ENCODE measurements at regions of chr1 and their contacts with region 1.

Region 1: DNA sequence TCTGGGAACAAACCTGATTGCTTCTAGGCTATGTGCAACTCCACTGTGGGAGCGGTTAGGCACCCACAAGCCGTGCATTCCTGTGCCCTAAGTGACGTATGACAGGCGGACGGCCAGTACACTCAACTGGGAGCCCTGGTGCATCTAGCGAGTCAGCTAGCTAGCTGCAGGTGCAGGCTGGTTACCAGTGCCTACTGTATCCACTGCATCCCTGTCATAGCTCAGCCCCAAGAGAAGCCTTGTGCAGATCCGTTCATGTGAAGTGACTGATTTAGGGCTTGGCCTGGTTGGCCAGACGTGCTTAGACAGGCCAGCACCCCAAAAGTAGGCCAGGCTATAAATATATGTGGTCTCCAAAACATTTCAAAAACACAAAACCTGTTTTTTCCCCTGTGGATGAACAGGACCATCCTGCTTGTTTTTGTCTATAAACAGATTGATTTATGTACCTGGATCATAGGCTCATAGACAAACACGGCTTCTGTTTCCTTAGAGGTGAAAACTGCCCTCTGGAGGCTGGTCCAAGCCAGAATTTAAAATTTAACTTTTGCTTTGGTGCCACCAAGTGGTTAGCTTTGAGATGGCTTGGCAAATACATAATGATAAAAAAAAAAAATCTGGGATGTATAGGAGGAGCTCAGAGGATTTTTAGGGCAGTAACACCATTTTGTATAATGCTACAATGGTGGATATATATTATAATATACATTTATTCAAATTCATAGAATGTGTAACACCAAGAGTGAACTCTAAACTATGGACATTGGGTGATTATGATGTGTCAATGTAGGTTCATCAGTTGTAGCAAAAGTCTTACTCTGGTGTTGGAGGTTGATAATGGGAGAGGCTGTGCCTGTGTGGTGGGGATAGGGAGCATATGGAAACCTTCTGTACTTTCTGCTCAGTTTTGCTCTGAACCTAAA is 68.5 kb downstream of the GIPC2 start:
- DNase-seq: peak in 4 of 5 donors; percentile 37 to 52 (median 47)
- ATAC-seq: peak; percentile 45 to 85 (median 73)
- H3K4me3 ChIP-seq: peak overlapping the region in 2 of 12 donors; percentile 1 to 11
- H3K27ac ChIP-seq: peak overlapping the region in 4 of 12 donors; percentile 22 to 63 (median 40)
- H3K4me1 ChIP-seq: peaks cover 0 to 7% (median 5%) of the 10 kb centered on the region in 12 donors
- H3K27me3 ChIP-seq: no peaks in the 10 kb centered on the region
- CTCF ChIP-seq: peak; percentile 79 to 98 (median 88)
- POLR2A ChIP-seq: no peak

Region 2: GRCh38 chr1:77825131-77825709 is 289.1 kb before region 1 on chr1:
- intact Hi-C with region 1: loop called in 3 of 10 experiments (anchors 10 kb)
- DNase-seq: peak in 1 of 5 donors; percentile 18
- ATAC-seq: peak; percentile 59 to 79 (median 72)
- H3K4me3 ChIP-seq: no peak overlapping the region
- H3K27ac ChIP-seq: peak overlapping the region in 7 of 12 donors; percentile 10 to 55 (median 33)
- H3K4me1 ChIP-seq: peaks cover 0 to 43% (median 11%) of the 10 kb centered on the region in 12 donors
- H3K27me3 ChIP-seq: no peaks in the 10 kb centered on the region
- CTCF ChIP-seq: peak in 8 of 12 donors; percentile 17 to 56 (median 40)
- POLR2A ChIP-seq: no peak

Region 3: GRCh38 chr1:77978969-77979876 is 135.1 kb before region 1 on chr1 and contains the start of gene FUBP1:
- intact Hi-C with region 1: loop called (anchors 1 to 5 kb)
- DNase-seq: peak; percentile 95 to 96 (median 95)
- ATAC-seq: peak; percentile 91 to 94 (median 94)
- H3K4me3 ChIP-seq: peak within 1 kb of the TSS; percentile 42 to 92 (median 80)
- H3K27ac ChIP-seq: peak within 1 kb of the TSS; percentile 91 to 99 (median 96)
- H3K4me1 ChIP-seq: peaks cover 0 to 63% (median 41%) of the 10 kb centered on the region in 12 donors
- H3K27me3 ChIP-seq: no peaks in the 10 kb centered on the region
- CTCF ChIP-seq: peak; percentile 51 to 90 (median 72)
- POLR2A ChIP-seq: peak in 1 of 2 donors; percentile 73
- total RNA-seq, gene FUBP1: 40.5 to 78.9 (median 64.3) TPM

Region 4: GRCh38 chr1:78045926-78046778 is 68.1 kb before region 1 on chr1 and contains the start of gene GIPC2:
- intact Hi-C with region 1: loop called in 6 of 10 experiments (anchors 1 to 10 kb)
- DNase-seq: peak; percentile 29 to 66 (median 40)
- ATAC-seq: peak in 3 of 4 donors; percentile 66 to 71 (median 68)
- H3K4me3 ChIP-seq: peak within 1 kb of the TSS; percentile 51 to 90 (median 74)
- H3K27ac ChIP-seq: peak within 1 kb of the TSS; percentile 1 to 83 (median 64)
- H3K4me1 ChIP-seq: peaks cover 0 to 38% (median 11%) of the 10 kb centered on the region in 12 donors
- H3K27me3 ChIP-seq: peaks cover 0 to 26% (median 0%) of the 10 kb centered on the region in 9 donors
- CTCF ChIP-seq: no peak
- POLR2A ChIP-seq: no peak
- total RNA-seq, gene GIPC2: 0.99 to 4.0 (median 2.8) TPM

Region 5: DNA sequence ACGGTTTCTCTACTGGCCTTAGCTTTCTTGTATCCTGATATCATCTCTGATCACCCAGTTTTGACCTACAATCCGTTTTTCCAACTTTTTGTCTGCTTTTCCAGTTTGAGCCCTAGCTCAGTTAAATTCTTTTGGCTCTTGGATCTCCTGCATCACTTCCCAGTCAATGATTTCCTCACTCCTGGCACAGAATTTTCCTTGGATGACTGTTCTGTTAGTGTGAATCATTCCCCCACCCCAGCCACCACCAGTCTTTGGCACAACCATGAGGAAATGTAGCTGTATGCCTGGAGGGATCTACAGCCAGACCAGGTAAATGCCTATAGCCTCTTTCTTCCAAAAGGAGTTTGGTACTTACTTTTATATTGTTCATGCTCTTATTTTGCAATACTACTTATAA is 189.3 kb after region 1 on chr1:
- intact Hi-C with region 1: no loop called
- DNase-seq: peak in 4 of 5 donors; percentile 28 to 45 (median 38)
- ATAC-seq: peak in 3 of 4 donors; percentile 72 to 92 (median 73)
- H3K4me3 ChIP-seq: no peak overlapping the region
- H3K27ac ChIP-seq: peak overlapping the region in 3 of 12 donors; percentile 27 to 49 (median 32)
- H3K4me1 ChIP-seq: no peaks in the 10 kb centered on the region
- H3K27me3 ChIP-seq: no peaks in the 10 kb centered on the region
- CTCF ChIP-seq: no peak
- POLR2A ChIP-seq: no peak